GM12878 (cell line): ENCODE measurements at regions of chr7 and their contacts with region 1.

Region 1: GRCh38 chr7:116236020-116236630 is 25.8 kb downstream of the TES start:
- DNase-seq: no peak
- ATAC-seq: peak; percentile 85
- H3K4me3 ChIP-seq: no peak overlapping the region
- H3K27ac ChIP-seq: no peak overlapping the region
- H3K4me1 ChIP-seq: no peaks in the 10 kb centered on the region
- H3K27me3 ChIP-seq: no peaks in the 10 kb centered on the region
- CTCF ChIP-seq: peak; percentile 28 to 66 (median 46); a peak in 5 of 6 replicates
- EP300 ChIP-seq: no peak
- POLR2A ChIP-seq: no peak
- RAD21 ChIP-seq: peak; percentile 76

Region 2: DNA sequence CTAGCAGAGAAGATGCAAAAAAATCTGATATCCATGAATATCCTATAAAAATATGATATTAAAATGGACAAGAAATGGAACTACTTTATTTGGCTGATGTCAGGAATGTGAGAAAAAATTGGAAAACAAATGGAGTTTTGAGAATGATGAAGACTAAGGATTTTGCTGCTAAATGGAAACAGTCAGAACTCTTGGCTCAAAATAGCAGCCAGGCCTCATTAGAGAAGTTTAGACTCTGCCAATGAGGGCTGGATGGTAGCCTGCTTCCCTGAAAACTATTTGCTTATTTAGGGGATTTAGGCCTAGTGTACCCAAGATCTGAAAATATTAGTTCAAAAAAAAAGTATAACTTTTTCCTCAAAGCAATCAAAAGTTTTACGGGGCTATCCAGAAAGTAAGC is 664.0 kb before region 1 on chr7:
- CTCF ChIA-PET with region 1: no interaction called
- POLR2A ChIA-PET with region 1: no interaction called
- RAD21 ChIA-PET with region 1: no interaction called
- SMC1A ChIA-PET with region 1: no interaction called
- in situ Hi-C with region 1: no loop called
- intact Hi-C with region 1: no loop called
- DNase-seq: no peak
- ATAC-seq: no peak
- H3K4me3 ChIP-seq: no peak overlapping the region
- H3K27ac ChIP-seq: no peak overlapping the region
- H3K4me1 ChIP-seq: no peaks in the 10 kb centered on the region
- H3K27me3 ChIP-seq: no peaks in the 10 kb centered on the region
- CTCF ChIP-seq: no peak
- EP300 ChIP-seq: no peak
- POLR2A ChIP-seq: no peak
- RAD21 ChIP-seq: no peak

Region 3: DNA sequence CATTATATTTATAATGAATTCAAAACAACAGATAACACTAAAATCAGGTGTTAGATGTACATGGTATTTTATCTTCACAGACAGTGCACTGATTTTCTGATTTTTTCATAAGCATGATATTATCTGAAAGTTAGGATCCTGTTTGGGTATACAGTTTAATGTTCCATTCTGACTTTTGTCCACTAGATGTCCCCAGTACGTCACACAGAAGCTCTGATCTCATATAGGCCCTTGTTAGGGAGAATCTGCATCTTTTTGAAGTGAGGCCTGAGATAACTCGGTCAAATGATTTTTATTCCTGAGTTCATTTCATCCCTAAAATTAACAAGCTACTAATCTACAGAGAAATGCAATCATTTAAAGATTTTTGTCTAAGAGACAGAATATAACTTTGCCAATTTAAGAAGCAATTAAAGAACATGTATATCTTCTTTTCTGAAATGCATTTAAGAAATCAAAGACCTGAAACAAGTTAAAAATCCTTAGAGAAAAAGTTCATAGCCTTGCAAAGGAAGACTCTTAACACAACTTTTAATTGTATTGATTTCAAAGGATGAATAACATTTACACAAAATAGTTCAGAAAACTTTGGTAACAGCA is 97.8 kb before region 1 on chr7:
- CTCF ChIA-PET with region 1: interaction called, 72 read pairs
- POLR2A ChIA-PET with region 1: interaction called, 5 read pairs
- RAD21 ChIA-PET with region 1: interaction called, 23 read pairs
- SMC1A ChIA-PET with region 1: interaction called, 13 read pairs
- in situ Hi-C with region 1: loop called (anchors 5 kb)
- intact Hi-C with region 1: loop called (anchors 1 kb)
- DNase-seq: no peak
- ATAC-seq: peak; percentile 99
- H3K4me3 ChIP-seq: no peak overlapping the region
- H3K27ac ChIP-seq: no peak overlapping the region
- H3K4me1 ChIP-seq: no peaks in the 10 kb centered on the region
- H3K27me3 ChIP-seq: no peaks in the 10 kb centered on the region
- CTCF ChIP-seq: peak; percentile 65 to 83 (median 71)
- EP300 ChIP-seq: no peak
- POLR2A ChIP-seq: no peak
- RAD21 ChIP-seq: peak; percentile 99

Region 4: GRCh38 chr7:116173051-116174028 is 62.8 kb before region 1 on chr7:
- CTCF ChIA-PET with region 1: interaction called, 176 read pairs
- POLR2A ChIA-PET with region 1: no interaction called
- RAD21 ChIA-PET with region 1: interaction called, 91 read pairs
- SMC1A ChIA-PET with region 1: interaction called, 188 read pairs
- in situ Hi-C with region 1: loop called (anchors 5 kb)
- intact Hi-C with region 1: loop called (anchors 2 kb)
- DNase-seq: no peak
- ATAC-seq: peak; percentile 74
- H3K4me3 ChIP-seq: no peak overlapping the region
- H3K27ac ChIP-seq: no peak overlapping the region
- H3K4me1 ChIP-seq: no peaks in the 10 kb centered on the region
- H3K27me3 ChIP-seq: no peaks in the 10 kb centered on the region
- CTCF ChIP-seq: peak; percentile 28 to 67 (median 31); a peak in 4 of 6 replicates
- EP300 ChIP-seq: no peak
- POLR2A ChIP-seq: no peak
- RAD21 ChIP-seq: peak; percentile 76

Region 5: GRCh38 chr7:116185956-116186355 is 50.2 kb before region 1 on chr7:
- CTCF ChIA-PET with region 1: interaction called, 176 read pairs
- POLR2A ChIA-PET with region 1: no interaction called
- RAD21 ChIA-PET with region 1: interaction called, 91 read pairs
- SMC1A ChIA-PET with region 1: interaction called, 188 read pairs
- in situ Hi-C with region 1: no loop called
- intact Hi-C with region 1: no loop called
- DNase-seq: no peak
- ATAC-seq: no peak
- H3K4me3 ChIP-seq: no peak overlapping the region
- H3K27ac ChIP-seq: no peak overlapping the region
- H3K4me1 ChIP-seq: no peaks in the 10 kb centered on the region
- H3K27me3 ChIP-seq: peaks cover 0 to 4% of the 10 kb centered on the region in 2 experiments; a peak in 1 of 4 replicates
- CTCF ChIP-seq: no peak
- EP300 ChIP-seq: no peak
- POLR2A ChIP-seq: no peak
- RAD21 ChIP-seq: no peak

Region 6: GRCh38 chr7:116211006-116211912 is 24.9 kb before region 1 on chr7:
- CTCF ChIA-PET with region 1: interaction called, 12 read pairs
- POLR2A ChIA-PET with region 1: interaction called, 3 read pairs
- RAD21 ChIA-PET with region 1: interaction called, 16 read pairs
- SMC1A ChIA-PET with region 1: interaction called, 72 read pairs
- in situ Hi-C with region 1: no loop called
- intact Hi-C with region 1: no loop called
- DNase-seq: peak; percentile 59
- ATAC-seq: peak; percentile 78
- H3K4me3 ChIP-seq: peak overlapping the region; percentile 91
- H3K27ac ChIP-seq: peak overlapping the region; percentile 86
- H3K4me1 ChIP-seq: peaks cover 9% of the 10 kb centered on the region
- H3K27me3 ChIP-seq: no peaks in the 10 kb centered on the region
- CTCF ChIP-seq: no peak
- EP300 ChIP-seq: no peak
- POLR2A ChIP-seq: peak; percentile 61; the same call in 1 of the 2 replicates
- RAD21 ChIP-seq: no peak

Region 7: GRCh38 chr7:116224492-116225098 is 11.5 kb before region 1 on chr7:
- CTCF ChIA-PET with region 1: interaction called, 26 read pairs
- POLR2A ChIA-PET with region 1: no interaction called
- RAD21 ChIA-PET with region 1: interaction called, 14 read pairs
- SMC1A ChIA-PET with region 1: interaction called, 22 read pairs
- in situ Hi-C with region 1: no loop called
- intact Hi-C with region 1: no loop called
- DNase-seq: no peak
- ATAC-seq: peak; percentile 86
- H3K4me3 ChIP-seq: peak overlapping the region; percentile 53; the same call in 1 of the 2 replicates
- H3K27ac ChIP-seq: peak overlapping the region; percentile 24; the same call in 1 of the 2 replicates
- H3K4me1 ChIP-seq: peaks cover 18% of the 10 kb centered on the region
- H3K27me3 ChIP-seq: no peaks in the 10 kb centered on the region
- CTCF ChIP-seq: no peak
- EP300 ChIP-seq: peak in 1 of 2 experiments; percentile 15; a peak in 1 of 4 replicates
- POLR2A ChIP-seq: no peak
- RAD21 ChIP-seq: no peak

Region 8: DNA sequence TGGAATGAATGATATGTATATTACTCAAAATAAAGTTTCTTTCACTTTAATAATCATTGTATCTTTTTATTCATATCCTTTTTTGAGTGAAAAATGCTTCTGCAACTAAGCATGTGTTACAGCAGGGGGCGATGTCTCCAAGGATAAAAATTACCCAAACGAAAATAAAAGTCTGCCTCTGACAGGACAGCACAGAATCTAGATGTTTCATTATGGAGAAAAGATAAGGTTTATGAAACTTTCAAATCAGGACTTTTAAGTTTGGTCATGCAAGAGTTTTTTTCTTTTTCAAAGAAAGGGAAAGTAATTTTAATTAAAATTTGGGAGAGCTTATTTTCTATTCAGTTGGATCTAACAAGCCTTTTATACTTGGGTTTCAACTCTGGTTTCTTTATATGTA is 22.6 kb after region 1 on chr7:
- CTCF ChIA-PET with region 1: interaction called, 24 read pairs
- POLR2A ChIA-PET with region 1: no interaction called
- RAD21 ChIA-PET with region 1: no interaction called
- SMC1A ChIA-PET with region 1: interaction called, 5 read pairs
- in situ Hi-C with region 1: no loop called
- intact Hi-C with region 1: no loop called
- DNase-seq: peak; percentile 23
- ATAC-seq: peak; percentile 59
- H3K4me3 ChIP-seq: no peak overlapping the region
- H3K27ac ChIP-seq: no peak overlapping the region
- H3K4me1 ChIP-seq: no peaks in the 10 kb centered on the region
- H3K27me3 ChIP-seq: no peaks in the 10 kb centered on the region
- CTCF ChIP-seq: peak; percentile 53 to 76 (median 65); a peak in 5 of 6 replicates
- EP300 ChIP-seq: no peak
- POLR2A ChIP-seq: no peak
- RAD21 ChIP-seq: peak; percentile 92